Panc1 (cell line): ENCODE measurements at regions of chr9 and their contacts with region 1.

Region 1: GRCh38 chr9:112844771-112845542 is 45.7 kb downstream of the SLC46A2 start:
- DNase-seq: peak; percentile 35
- ATAC-seq: peak; percentile 86
- H3K4me3 ChIP-seq: no peak overlapping the region
- H3K27ac ChIP-seq: no peak overlapping the region
- H3K4me1 ChIP-seq: no peaks in the 10 kb centered on the region
- H3K27me3 ChIP-seq: no peaks in the 10 kb centered on the region
- CTCF ChIP-seq: peak; percentile 94

Region 2: DNA sequence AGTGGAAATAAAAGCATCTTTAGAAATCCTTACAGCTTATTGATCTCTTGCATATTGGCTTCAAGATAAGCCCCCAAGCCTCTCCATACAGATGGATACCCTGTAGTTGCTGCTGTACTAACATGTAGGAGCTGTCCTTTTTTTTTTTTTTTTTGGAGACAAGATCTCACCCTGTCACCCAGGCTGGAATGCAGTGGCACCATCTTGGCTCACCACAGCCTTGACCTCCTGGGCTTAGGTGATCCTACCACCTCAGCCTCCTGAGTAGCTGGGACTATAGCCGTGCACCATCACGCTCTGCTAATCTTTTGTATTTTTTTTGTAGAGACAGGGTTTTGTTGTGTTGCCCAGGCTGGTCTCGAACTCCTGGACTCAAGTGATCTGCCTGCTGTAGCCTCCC is 59.0 kb before region 1 on chr9:
- CTCF ChIA-PET with region 1: no interaction called
- POLR2A ChIA-PET with region 1: interaction called, 10 read pairs
- in situ Hi-C with region 1: no loop called
- intact Hi-C with region 1: no loop called
- DNase-seq: no peak
- ATAC-seq: no peak
- H3K4me3 ChIP-seq: no peak overlapping the region
- H3K27ac ChIP-seq: no peak overlapping the region
- H3K4me1 ChIP-seq: no peaks in the 10 kb centered on the region; the same call in 1 of the 2 replicates
- H3K27me3 ChIP-seq: no peaks in the 10 kb centered on the region
- CTCF ChIP-seq: no peak

Region 3: GRCh38 chr9:112898872-112899311 is 53.9 kb after region 1 on chr9:
- CTCF ChIA-PET with region 1: interaction called, 16 read pairs
- POLR2A ChIA-PET with region 1: no interaction called
- in situ Hi-C with region 1: no loop called
- intact Hi-C with region 1: loop called (anchors 5 kb)
- DNase-seq: no peak
- ATAC-seq: no peak
- H3K4me3 ChIP-seq: no peak overlapping the region
- H3K27ac ChIP-seq: no peak overlapping the region
- H3K4me1 ChIP-seq: 0 out of 2 replicates have a peak, but pooled peaks cover 4% of the 10 kb centered on the region
- H3K27me3 ChIP-seq: peaks cover 2% of the 10 kb centered on the region; the same call in 1 of the 2 replicates
- CTCF ChIP-seq: no peak